Spleen (tissue), 13 donors: ENCODE measurements at regions of chr17 and their contacts with region 1.

Region 1: GRCh38 chr17:68205251-68205807 is 42.5 kb upstream of the AMZ2 start:
- DNase-seq: peak; percentile 99
- H3K4me3 ChIP-seq: peak overlapping the region; percentile 63 to 87 (median 72)
- H3K27ac ChIP-seq: peak overlapping the region; percentile 88 to 99 (median 96)
- H3K4me1 ChIP-seq: peaks cover 9 to 63% (median 41%) of the 10 kb centered on the region in 6 donors
- H3K27me3 ChIP-seq: peaks cover 0 to 13% (median under 1%) of the 10 kb centered on the region in 7 donors
- CTCF ChIP-seq: peak; percentile 83 to 98 (median 95)
- POLR2A ChIP-seq: peak in 2 of 3 donors; percentile 66 to 83

Region 2: GRCh38 chr17:68247445-68248198 is 42.3 kb after region 1 on chr17 and contains the start of gene AMZ2:
- intact Hi-C with region 1: loop called (anchors 5 kb)
- DNase-seq: peak; percentile 99
- H3K4me3 ChIP-seq: peak within 1 kb of the TSS; percentile 48 to 89 (median 70)
- H3K27ac ChIP-seq: peak within 1 kb of the TSS; percentile 92 to 100 (median 99)
- H3K4me1 ChIP-seq: peaks cover 20 to 55% (median 36%) of the 10 kb centered on the region in 6 donors
- H3K27me3 ChIP-seq: no peaks in the 10 kb centered on the region
- CTCF ChIP-seq: peak in 2 of 11 experiments; percentile 17 to 34
- POLR2A ChIP-seq: peak; percentile 86 to 94 (median 87)
- total RNA-seq, gene AMZ2: 40.4 to 55.0 (median 49.2) TPM